T-cell (primary cell): ENCODE measurements at regions of chr4 and their contacts with region 1.

Region 1: GRCh38 chr4:72568959-72569718 is at the start of gene ADAMTS3:
- DNase-seq: peak in 2 of 35 experiments; percentile 2
- ATAC-seq: peak; percentile 16 to 38 (median 34)
- H3K4me3 ChIP-seq: peak within 1 kb of the TSS; percentile 19 to 84
- H3K4me3 Mint-ChIP-seq: peak within 1 kb of the TSS; percentile 50 to 86 (median 68)
- H3K27ac ChIP-seq: no peak within 1 kb of the TSS
- H3K27ac Mint-ChIP-seq: no peak within 1 kb of the TSS
- H3K4me1 ChIP-seq: peaks cover 0 to 13% of the 10 kb centered on the region in 2 experiments
- H3K4me1 Mint-ChIP-seq: peaks cover 20 to 27% (median 23%) of the 10 kb centered on the region in 3 donors
- H3K27me3 ChIP-seq: peaks cover 0 to 21% of the 10 kb centered on the region in 2 experiments
- H3K27me3 Mint-ChIP-seq: peaks cover 49 to 56% of the 10 kb centered on the region in 2 donors
- total RNA-seq, gene ADAMTS3: not detected

Region 2: GRCh38 chr4:72666910-72667309 is 97.8 kb after region 1 on chr4:
- CTCF ChIA-PET with region 1: no interaction called
- POLR2A ChIA-PET with region 1: no interaction called
- DNase-seq: no peak
- ATAC-seq: no peak
- H3K4me3 ChIP-seq: no peak overlapping the region
- H3K4me3 Mint-ChIP-seq: no peak overlapping the region
- H3K27ac ChIP-seq: no peak overlapping the region
- H3K27ac Mint-ChIP-seq: no peak overlapping the region
- H3K4me1 ChIP-seq: no peaks in the 10 kb centered on the region
- H3K4me1 Mint-ChIP-seq: no peaks in the 10 kb centered on the region
- H3K27me3 ChIP-seq: peaks cover 0 to 2% of the 10 kb centered on the region in 2 experiments
- H3K27me3 Mint-ChIP-seq: peaks cover 6 to 7% of the 10 kb centered on the region in 2 donors

Region 3: DNA sequence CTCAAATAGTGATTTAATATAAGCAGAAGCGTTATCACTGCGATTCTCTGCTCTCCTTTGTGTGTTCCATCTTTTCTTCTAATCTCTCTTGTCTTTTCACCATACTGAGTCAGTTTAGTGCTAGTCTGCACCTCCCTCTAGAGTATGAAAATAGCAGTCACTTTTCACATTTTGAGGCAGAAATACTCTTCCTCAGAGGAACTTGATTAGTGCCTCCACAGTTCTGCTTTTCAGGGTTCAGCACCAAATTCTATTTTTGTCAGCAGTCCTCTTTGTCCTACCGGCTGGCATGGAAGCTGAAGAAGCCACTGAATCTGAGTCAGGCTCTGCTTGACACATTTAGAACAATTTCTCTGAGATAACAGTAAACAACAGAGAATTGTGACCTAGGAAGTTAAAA is 739.1 kb after region 1 on chr4:
- CTCF ChIA-PET with region 1: no interaction called
- POLR2A ChIA-PET with region 1: interaction called in 1 of 2 experiments, 11 read pairs
- DNase-seq: peak in 1 of 35 experiments; percentile 3
- ATAC-seq: no peak
- H3K4me3 ChIP-seq: no peak overlapping the region
- H3K4me3 Mint-ChIP-seq: no peak overlapping the region
- H3K27ac ChIP-seq: no peak overlapping the region
- H3K27ac Mint-ChIP-seq: no peak overlapping the region
- H3K4me1 ChIP-seq: no peaks in the 10 kb centered on the region
- H3K4me1 Mint-ChIP-seq: no peaks in the 10 kb centered on the region
- H3K27me3 ChIP-seq: no peaks in the 10 kb centered on the region
- H3K27me3 Mint-ChIP-seq: no peaks in the 10 kb centered on the region